CD8-positive, alpha-beta T cell (primary cell): ENCODE measurements at regions of chr17 and their contacts with region 1.

Region 1: GRCh38 chr17:50707289-50708049 is at the start of gene ANKRD40:
- DNase-seq: peak; percentile 80 to 94 (median 90)
- ATAC-seq: peak; percentile 78
- H3K4me3 ChIP-seq: peak within 1 kb of the TSS; percentile 52 to 76
- H3K4me3 Mint-ChIP-seq: peak within 1 kb of the TSS; percentile 89
- H3K27ac ChIP-seq: peak within 1 kb of the TSS; percentile 77 to 96
- H3K27ac Mint-ChIP-seq: peak within 1 kb of the TSS; percentile 93
- H3K4me1 ChIP-seq: peaks cover 15% of the 10 kb centered on the region
- H3K4me1 Mint-ChIP-seq: peaks cover 52% of the 10 kb centered on the region
- H3K27me3 ChIP-seq: no peaks in the 10 kb centered on the region
- H3K27me3 Mint-ChIP-seq: no peaks in the 10 kb centered on the region
- CTCF ChIP-seq: no peak
- total RNA-seq, gene ANKRD40: 23.1 to 24.7 TPM

Region 2: DNA sequence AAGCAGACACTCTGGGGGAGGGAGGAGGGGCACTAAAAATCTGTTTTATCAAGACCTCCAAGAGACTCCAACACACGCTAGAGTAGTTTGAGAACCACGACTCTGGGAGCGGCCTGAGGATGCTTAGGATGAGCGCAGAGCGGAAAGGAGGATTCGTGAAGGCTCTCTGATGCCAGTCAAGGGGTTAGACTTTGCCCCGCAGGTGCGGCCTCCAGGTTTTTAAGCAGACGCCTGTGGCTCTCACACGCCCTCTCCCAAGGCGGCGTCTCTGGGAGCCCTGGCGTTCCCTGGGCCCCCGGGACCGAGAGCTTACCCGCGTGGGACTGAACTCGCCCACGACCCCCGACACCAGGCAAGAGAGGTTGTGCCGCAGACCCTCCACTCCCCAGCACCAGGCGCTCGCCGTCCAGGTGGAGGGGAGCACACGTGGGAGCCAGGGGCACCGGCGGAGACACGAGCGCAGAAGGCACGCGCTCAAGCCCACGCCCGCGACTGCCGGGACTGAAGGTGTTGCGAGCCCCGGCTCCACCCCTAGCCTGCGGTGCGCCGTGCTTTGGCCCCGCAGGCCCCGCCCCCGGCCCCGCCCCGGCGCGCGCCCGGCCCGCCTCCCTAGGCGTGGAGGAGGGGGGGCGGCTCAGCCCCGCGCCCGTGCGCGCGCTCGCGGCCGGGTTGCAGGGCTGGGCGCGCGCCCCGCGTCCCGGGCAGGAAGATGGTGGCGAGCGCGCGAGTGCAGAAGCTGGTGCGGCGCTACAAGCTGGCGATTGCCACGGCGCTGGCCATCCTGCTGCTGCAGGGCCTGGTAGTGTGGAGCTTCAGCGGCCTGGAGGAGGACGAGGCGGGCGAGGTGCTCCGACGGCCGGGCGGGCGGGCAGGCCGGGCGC is 361.8 kb before region 1 on chr17 and contains the start of gene XYLT2:
- CTCF ChIA-PET with region 1: no interaction called
- POLR2A ChIA-PET with region 1: no interaction called
- intact Hi-C with region 1: loop called in 1 of 2 experiments (anchors 5 kb)
- DNase-seq: peak; percentile 83 to 96 (median 93)
- ATAC-seq: peak; percentile 94
- H3K4me3 ChIP-seq: peak within 1 kb of the TSS; percentile 78 to 90
- H3K4me3 Mint-ChIP-seq: peak within 1 kb of the TSS; percentile 93
- H3K27ac ChIP-seq: peak within 1 kb of the TSS; percentile 56 to 77
- H3K27ac Mint-ChIP-seq: peak within 1 kb of the TSS; percentile 91
- H3K4me1 ChIP-seq: peaks cover 29% of the 10 kb centered on the region
- H3K4me1 Mint-ChIP-seq: peaks cover 37% of the 10 kb centered on the region
- H3K27me3 ChIP-seq: no peaks in the 10 kb centered on the region
- H3K27me3 Mint-ChIP-seq: no peaks in the 10 kb centered on the region
- CTCF ChIP-seq: no peak
- total RNA-seq, gene XYLT2: 9.0 to 9.4 TPM

Region 3: GRCh38 chr17:50372758-50373556 is 334.5 kb before region 1 on chr17 and contains the starts of genes EME1 and MRPL27:
- CTCF ChIA-PET with region 1: no interaction called
- POLR2A ChIA-PET with region 1: no interaction called
- intact Hi-C with region 1: loop called (anchors 2 to 10 kb)
- DNase-seq: peak; percentile 73 to 93 (median 87)
- ATAC-seq: peak; percentile 91
- H3K4me3 ChIP-seq: peak within 1 kb of the TSS; percentile 93 to 98
- H3K4me3 Mint-ChIP-seq: peak within 1 kb of the TSS; percentile 97
- H3K27ac ChIP-seq: peak within 1 kb of the TSS; percentile 98 to 99
- H3K27ac Mint-ChIP-seq: peak within 1 kb of the TSS; percentile 99
- H3K4me1 ChIP-seq: peaks cover 20% of the 10 kb centered on the region
- H3K4me1 Mint-ChIP-seq: peaks cover 28% of the 10 kb centered on the region
- H3K27me3 ChIP-seq: no peaks in the 10 kb centered on the region
- H3K27me3 Mint-ChIP-seq: no peaks in the 10 kb centered on the region
- CTCF ChIP-seq: no peak
- total RNA-seq, gene EME1: 0.53 to 0.60 TPM
- total RNA-seq, gene MRPL27: 28.6 to 30.8 TPM

Region 4: GRCh38 chr17:50541716-50542688 is 165.5 kb before region 1 on chr17:
- CTCF ChIA-PET with region 1: no interaction called
- POLR2A ChIA-PET with region 1: no interaction called
- intact Hi-C with region 1: loop called in 1 of 2 experiments (anchors 5 kb)
- DNase-seq: peak; percentile 52 to 89 (median 82)
- ATAC-seq: peak; percentile 86
- H3K4me3 ChIP-seq: peak overlapping the region; percentile 69 to 74
- H3K4me3 Mint-ChIP-seq: peak overlapping the region; percentile 83
- H3K27ac ChIP-seq: peak overlapping the region in 1 of 2 experiments; percentile 29
- H3K27ac Mint-ChIP-seq: peak overlapping the region; percentile 70
- H3K4me1 ChIP-seq: peaks cover 20% of the 10 kb centered on the region
- H3K4me1 Mint-ChIP-seq: peaks cover 17% of the 10 kb centered on the region
- H3K27me3 ChIP-seq: no peaks in the 10 kb centered on the region
- H3K27me3 Mint-ChIP-seq: peaks cover 6% of the 10 kb centered on the region
- CTCF ChIP-seq: peak; percentile 32

Region 5: GRCh38 chr17:50626037-50626574 is 81.4 kb before region 1 on chr17:
- CTCF ChIA-PET with region 1: interaction called, 3 read pairs
- POLR2A ChIA-PET with region 1: no interaction called
- intact Hi-C with region 1: loop called in 1 of 2 experiments (anchors 1 kb)
- DNase-seq: peak; percentile 30 to 75 (median 63)
- ATAC-seq: peak; percentile 67
- H3K4me3 ChIP-seq: no peak overlapping the region
- H3K4me3 Mint-ChIP-seq: no peak overlapping the region
- H3K27ac ChIP-seq: no peak overlapping the region
- H3K27ac Mint-ChIP-seq: no peak overlapping the region
- H3K4me1 ChIP-seq: no peaks in the 10 kb centered on the region
- H3K4me1 Mint-ChIP-seq: no peaks in the 10 kb centered on the region
- H3K27me3 ChIP-seq: peaks cover 5 to 13% of the 10 kb centered on the region in 2 experiments
- H3K27me3 Mint-ChIP-seq: peaks cover 42% of the 10 kb centered on the region
- CTCF ChIP-seq: peak; percentile 59

Region 6: DNA sequence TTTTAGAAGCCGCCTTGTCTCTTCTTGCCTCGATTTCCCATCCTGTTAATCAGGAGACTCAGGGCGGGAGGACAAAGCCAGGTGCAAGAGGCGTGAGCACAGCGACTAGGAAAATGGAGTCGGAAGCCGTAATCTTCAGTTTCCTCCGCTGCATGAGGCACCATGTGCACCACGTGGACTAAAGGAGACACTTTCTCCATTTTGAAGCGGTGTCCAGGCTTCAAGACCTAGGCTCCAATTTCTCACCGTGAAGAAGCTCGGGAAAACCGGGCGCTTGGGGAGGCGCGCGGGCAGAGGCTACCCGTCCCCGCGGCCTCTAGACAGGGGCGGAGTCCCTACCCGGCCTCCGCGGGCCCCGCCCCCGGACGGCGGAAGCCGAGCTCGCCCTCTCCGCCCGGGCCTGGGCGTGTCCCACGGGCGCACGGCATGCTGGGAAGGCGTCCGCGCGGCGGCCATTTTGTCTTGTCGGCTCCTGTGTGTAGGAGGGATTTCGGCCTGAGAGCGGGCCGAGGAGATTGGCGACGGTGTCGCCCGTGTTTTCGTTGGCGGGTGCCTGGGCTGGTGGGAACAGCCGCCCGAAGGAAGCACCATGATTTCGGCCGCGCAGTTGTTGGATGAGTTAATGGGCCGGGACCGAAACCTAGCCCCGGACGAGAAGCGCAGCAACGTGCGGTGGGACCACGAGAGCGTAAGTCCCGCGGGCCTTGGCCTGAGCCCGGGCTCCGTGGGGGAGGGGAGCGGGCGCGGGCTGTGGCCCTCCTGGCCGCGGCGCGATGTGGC is 11.9 kb after region 1 on chr17 and contains the start of gene LUC7L3:
- CTCF ChIA-PET with region 1: no interaction called
- POLR2A ChIA-PET with region 1: interaction called, 36 read pairs
- intact Hi-C with region 1: loop called (anchors 1 kb)
- DNase-seq: peak; percentile 86 to 96 (median 92)
- ATAC-seq: peak; percentile 94
- H3K4me3 ChIP-seq: peak within 1 kb of the TSS; percentile 87 to 92
- H3K4me3 Mint-ChIP-seq: peak within 1 kb of the TSS; percentile 98
- H3K27ac ChIP-seq: peak within 1 kb of the TSS; percentile 93 to 97
- H3K27ac Mint-ChIP-seq: peak within 1 kb of the TSS; percentile 99
- H3K4me1 ChIP-seq: peaks cover 31% of the 10 kb centered on the region
- H3K4me1 Mint-ChIP-seq: peaks cover 34% of the 10 kb centered on the region
- H3K27me3 ChIP-seq: no peaks in the 10 kb centered on the region
- H3K27me3 Mint-ChIP-seq: no peaks in the 10 kb centered on the region
- CTCF ChIP-seq: no peak
- total RNA-seq, gene LUC7L3: 90.0 to 96.1 TPM

Region 7: DNA sequence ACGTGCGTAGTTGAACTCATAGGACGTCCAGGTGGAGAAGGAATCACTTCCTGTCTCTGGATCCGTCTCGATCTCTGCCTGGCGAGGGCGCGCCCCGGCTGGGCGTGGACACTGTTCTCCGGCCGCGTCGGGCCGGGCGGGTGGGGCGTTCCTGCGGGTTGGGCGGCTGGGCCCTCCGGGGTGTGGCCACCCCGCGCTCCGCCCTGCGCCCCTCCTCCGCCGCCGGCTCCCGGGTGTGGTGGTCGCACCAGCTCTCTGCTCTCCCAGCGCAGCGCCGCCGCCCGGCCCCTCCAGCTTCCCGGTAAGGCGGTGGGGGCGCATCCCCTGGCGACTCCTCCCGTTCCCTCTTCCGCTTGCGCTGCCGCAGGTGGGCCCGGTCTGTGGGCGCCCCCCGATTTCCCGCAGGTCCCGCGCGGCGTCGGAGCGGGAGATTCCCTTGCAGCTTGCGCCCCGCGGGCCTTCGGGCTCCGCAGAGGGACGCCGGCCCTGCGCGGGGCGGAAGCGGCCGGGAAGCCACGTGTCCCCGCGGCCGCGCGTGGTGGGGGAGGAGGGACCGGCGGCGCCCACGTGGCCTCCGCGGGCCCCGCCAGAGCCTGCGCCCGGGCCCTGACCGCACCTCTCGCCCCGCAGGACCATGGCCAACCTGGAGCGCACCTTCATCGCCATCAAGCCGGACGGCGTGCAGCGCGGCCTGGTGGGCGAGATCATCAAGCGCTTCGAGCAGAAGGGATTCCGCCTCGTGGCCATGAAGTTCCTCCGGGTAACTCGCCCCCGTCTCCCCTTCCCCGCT is 458.9 kb after region 1 on chr17 and contains the start of gene NME2:
- CTCF ChIA-PET with region 1: no interaction called
- POLR2A ChIA-PET with region 1: no interaction called
- intact Hi-C with region 1: loop called in 1 of 2 experiments (anchors 10 kb)
- DNase-seq: peak; percentile 10 to 84 (median 59)
- ATAC-seq: peak; percentile 69
- H3K4me3 ChIP-seq: peak within 1 kb of the TSS; percentile 70 to 78
- H3K4me3 Mint-ChIP-seq: peak within 1 kb of the TSS; percentile 90
- H3K27ac ChIP-seq: peak within 1 kb of the TSS; percentile 52 to 84
- H3K27ac Mint-ChIP-seq: peak within 1 kb of the TSS; percentile 91
- H3K4me1 ChIP-seq: peaks cover 13% of the 10 kb centered on the region
- H3K4me1 Mint-ChIP-seq: peaks cover 23% of the 10 kb centered on the region
- H3K27me3 ChIP-seq: no peaks in the 10 kb centered on the region
- H3K27me3 Mint-ChIP-seq: no peaks in the 10 kb centered on the region
- CTCF ChIP-seq: no peak
- total RNA-seq, gene NME2: 165 to 168 TPM